ENCODE measurements at regions of chr12 and their contacts with region 1.

Region 1: GRCh38 chr12:4276524-4277204 is 3.1 kb downstream of the CCND2 start:
- DNase-seq: peak; percentile 72 to 93
- ATAC-seq: peak; percentile 19 to 56 (median 44)
- H3K4me3 ChIP-seq: peak overlapping the region in 7 of 10 donors; percentile 63 to 95 (median 92)
- H3K27ac ChIP-seq: peak overlapping the region in 9 of 10 donors; percentile 81 to 98 (median 96)
- H3K4me1 ChIP-seq: peaks cover 17 to 84% (median 73%) of the 10 kb centered on the region in 9 donors
- H3K27me3 ChIP-seq: peaks cover 0 to 45% (median 0%) of the 10 kb centered on the region in 7 donors
- CTCF ChIP-seq: peak; percentile 73 to 92 (median 90)

Region 2: DNA sequence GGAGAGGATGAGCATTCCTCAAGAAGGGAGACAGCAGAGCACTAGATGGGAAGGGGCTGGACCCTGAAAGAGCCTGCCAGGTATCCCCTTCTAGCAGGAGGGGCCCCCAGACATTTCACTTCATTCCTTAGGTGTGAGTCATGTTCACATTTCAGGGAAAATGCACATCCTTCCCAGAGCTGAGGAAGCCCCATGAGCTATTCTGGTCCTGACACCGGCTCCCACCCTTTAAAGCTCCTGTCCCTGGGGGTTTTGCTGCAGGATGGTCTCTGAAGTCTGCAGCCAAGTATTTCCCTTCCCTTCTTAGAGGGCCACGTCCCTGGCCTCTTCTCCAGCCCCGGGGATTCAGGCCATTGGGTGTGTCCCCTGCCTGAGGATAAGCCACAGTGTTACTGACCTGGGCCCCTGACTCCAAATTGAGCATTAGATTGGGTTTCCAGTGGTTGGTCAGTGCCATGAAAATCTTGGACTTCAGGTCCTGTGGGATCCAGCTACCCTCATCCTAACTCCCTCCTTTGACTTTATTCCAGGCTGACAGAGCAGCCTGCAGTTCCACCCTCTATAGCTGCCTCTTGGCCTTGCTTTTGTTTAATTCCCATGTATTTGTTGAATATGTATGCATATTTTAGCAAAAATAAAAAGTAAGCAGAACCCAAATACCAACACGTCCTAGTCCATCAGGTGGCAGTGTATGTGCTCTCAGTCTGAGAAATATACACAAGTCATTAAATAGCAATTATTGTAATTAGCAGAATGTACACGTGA is 1956.7 kb before region 1 on chr12:
- intact Hi-C with region 1: no loop called
- DNase-seq: peak in 1 of 2 donors; percentile 71
- ATAC-seq: peak; percentile 15 to 67 (median 36)
- H3K4me3 ChIP-seq: no peak overlapping the region
- H3K27ac ChIP-seq: peak overlapping the region in 6 of 10 donors; percentile 21 to 77 (median 58)
- H3K4me1 ChIP-seq: peaks cover 24 to 89% (median 63%) of the 10 kb centered on the region in 9 donors
- H3K27me3 ChIP-seq: no peaks in the 10 kb centered on the region
- CTCF ChIP-seq: no peak

Region 3: GRCh38 chr12:3920351-3921150 is 356.1 kb before region 1 on chr12:
- intact Hi-C with region 1: no loop called
- DNase-seq: no peak
- ATAC-seq: no peak
- H3K4me3 ChIP-seq: no peak overlapping the region
- H3K27ac ChIP-seq: no peak overlapping the region
- H3K4me1 ChIP-seq: no peaks in the 10 kb centered on the region
- H3K27me3 ChIP-seq: peaks cover 0 to 81% (median 56%) of the 10 kb centered on the region in 7 donors
- CTCF ChIP-seq: no peak

Region 4: DNA sequence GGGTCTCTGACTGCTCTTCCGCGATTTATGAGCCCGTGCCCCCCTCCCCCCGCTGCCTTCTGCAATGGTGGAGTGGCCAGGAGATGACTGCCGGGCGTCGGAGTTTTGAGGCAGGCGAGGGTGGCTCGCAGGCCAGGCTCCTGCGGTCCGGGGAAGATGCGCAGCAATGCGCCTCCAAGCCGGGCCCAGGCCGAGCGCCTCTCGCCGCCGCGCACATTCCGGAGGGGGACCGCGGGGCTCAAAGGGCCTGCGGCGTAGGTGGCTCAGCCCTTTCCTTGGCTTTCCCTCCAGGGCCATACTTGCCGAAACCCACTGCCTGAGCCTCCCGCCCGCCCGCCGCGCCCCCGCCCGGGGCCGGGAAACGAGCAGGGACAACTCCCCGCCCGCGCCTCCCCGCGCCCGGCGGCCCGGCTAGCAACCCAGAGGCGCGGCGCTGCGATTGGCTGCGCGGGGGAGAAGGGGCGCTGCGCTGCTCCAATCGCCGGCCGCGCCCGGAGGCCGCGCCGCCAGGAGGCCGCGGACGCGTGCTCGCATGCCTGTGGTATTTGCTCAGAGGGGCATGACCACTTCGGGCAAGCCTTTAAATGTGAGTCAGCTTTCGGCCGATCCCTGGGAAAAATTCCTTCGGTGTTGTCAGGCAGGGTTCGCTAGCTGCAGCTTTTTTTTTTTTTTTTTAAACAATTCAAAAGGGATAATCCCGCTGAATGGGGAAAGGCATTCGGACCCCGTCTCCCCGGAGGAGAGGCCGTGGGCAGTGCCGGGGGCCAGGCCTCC is 245.5 kb before region 1 on chr12:
- intact Hi-C with region 1: loop called in 7 of 10 experiments (anchors 2 to 5 kb)
- DNase-seq: peak; percentile 84
- ATAC-seq: peak; percentile 96 to 99 (median 98)
- H3K4me3 ChIP-seq: peak overlapping the region in 9 of 10 donors; percentile 38 to 71 (median 59)
- H3K27ac ChIP-seq: peak overlapping the region in 8 of 10 donors; percentile 22 to 82 (median 78)
- H3K4me1 ChIP-seq: peaks cover 0 to 24% (median 12%) of the 10 kb centered on the region in 9 donors
- H3K27me3 ChIP-seq: peaks cover 0 to 11% (median 0%) of the 10 kb centered on the region in 7 donors
- CTCF ChIP-seq: peak in 3 of 9 donors; percentile 8 to 34 (median 14)

Region 5: DNA sequence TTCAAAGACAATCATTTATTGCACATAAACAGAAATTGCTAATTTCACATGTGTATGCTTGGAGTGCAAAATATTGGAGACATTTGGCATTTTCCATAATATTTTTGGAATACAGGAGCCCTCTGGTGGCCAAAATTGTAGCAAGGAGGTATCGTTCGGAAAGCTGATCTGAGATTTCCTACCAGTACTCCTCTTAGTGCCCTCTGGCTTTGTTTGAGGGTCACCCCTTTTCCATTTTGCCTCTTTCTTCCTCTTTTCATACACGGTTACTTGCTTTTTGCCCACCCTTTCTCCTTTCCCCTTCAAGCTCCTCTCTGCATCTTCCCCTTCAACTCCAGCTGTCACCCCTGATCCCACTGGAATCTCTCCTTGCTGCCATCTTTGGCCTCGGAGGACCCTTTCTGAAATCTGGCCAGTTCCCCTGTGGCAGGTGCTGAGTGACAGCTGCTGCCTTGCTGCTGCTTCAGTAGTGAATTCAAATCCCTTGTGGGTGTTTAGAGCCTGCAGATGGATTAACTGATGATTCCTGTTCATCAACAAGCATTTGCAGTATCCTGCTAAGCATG is 238.8 kb before region 1 on chr12:
- intact Hi-C with region 1: loop called in 7 of 10 experiments (anchors 2 to 5 kb)
- DNase-seq: peak in 1 of 2 donors; percentile 56
- ATAC-seq: peak in 1 of 8 donors; percentile 52
- H3K4me3 ChIP-seq: no peak overlapping the region
- H3K27ac ChIP-seq: no peak overlapping the region
- H3K4me1 ChIP-seq: peaks cover 0 to 4% (median 0%) of the 10 kb centered on the region in 9 donors
- H3K27me3 ChIP-seq: peaks cover 0 to 6% (median 0%) of the 10 kb centered on the region in 7 donors
- CTCF ChIP-seq: peak; percentile 44 to 83 (median 71)

Region 6: GRCh38 chr12:4107436-4107878 is 169.2 kb before region 1 on chr12:
- intact Hi-C with region 1: loop called (anchors 1 to 10 kb)
- DNase-seq: peak in 1 of 2 donors; percentile 55
- ATAC-seq: peak in 7 of 8 donors; percentile 55 to 77 (median 60)
- H3K4me3 ChIP-seq: no peak overlapping the region
- H3K27ac ChIP-seq: no peak overlapping the region
- H3K4me1 ChIP-seq: peaks cover 0 to 13% (median 0%) of the 10 kb centered on the region in 9 donors
- H3K27me3 ChIP-seq: peaks cover 0 to 8% (median 0%) of the 10 kb centered on the region in 7 donors
- CTCF ChIP-seq: peak; percentile 20 to 75 (median 56)

Region 7: GRCh38 chr12:4148418-4149056 is 128.1 kb before region 1 on chr12:
- intact Hi-C with region 1: loop called in 1 of 10 experiments (anchors 10 kb)
- DNase-seq: peak; percentile 40 to 67
- ATAC-seq: peak in 7 of 8 donors; percentile 33 to 75 (median 50)
- H3K4me3 ChIP-seq: no peak overlapping the region
- H3K27ac ChIP-seq: no peak overlapping the region
- H3K4me1 ChIP-seq: peaks cover 0 to 51% (median 0%) of the 10 kb centered on the region in 9 donors
- H3K27me3 ChIP-seq: peaks cover 0 to 11% (median 0%) of the 10 kb centered on the region in 7 donors
- CTCF ChIP-seq: no peak

Region 8: DNA sequence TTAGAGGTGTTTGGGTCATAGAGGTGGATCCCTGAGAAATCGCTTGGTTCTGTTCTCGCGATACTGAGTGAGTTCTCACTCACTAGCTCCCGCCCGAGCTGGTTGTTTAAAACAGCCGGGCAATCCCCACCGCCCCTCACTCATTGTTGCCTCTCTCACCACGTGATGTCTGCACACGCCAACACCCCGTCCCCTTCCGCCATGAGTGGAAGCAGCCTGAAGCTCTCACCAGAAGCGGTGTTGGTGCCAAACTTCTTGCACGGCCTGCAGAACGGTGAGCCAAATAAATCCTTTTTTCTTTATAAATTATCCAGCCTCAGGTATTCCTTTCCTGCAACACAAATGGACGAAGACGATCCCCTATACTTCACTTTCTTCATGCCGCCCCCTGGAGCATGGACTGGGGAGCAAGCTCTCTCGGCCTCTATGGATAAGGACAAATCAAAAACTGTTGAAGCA is 48.5 kb before region 1 on chr12:
- intact Hi-C with region 1: no loop called
- DNase-seq: no peak
- ATAC-seq: no peak
- H3K4me3 ChIP-seq: no peak overlapping the region
- H3K27ac ChIP-seq: no peak overlapping the region
- H3K4me1 ChIP-seq: peaks cover 0 to 13% (median 0%) of the 10 kb centered on the region in 9 donors
- H3K27me3 ChIP-seq: peaks cover 0 to 39% (median 7%) of the 10 kb centered on the region in 7 donors
- CTCF ChIP-seq: no peak